Activated B cell treated with CpG ODN at 0.5 μM for 24 hours (primary cell): ENCODE measurements at regions of chr6 and their contacts with region 1.

Region 1: DNA sequence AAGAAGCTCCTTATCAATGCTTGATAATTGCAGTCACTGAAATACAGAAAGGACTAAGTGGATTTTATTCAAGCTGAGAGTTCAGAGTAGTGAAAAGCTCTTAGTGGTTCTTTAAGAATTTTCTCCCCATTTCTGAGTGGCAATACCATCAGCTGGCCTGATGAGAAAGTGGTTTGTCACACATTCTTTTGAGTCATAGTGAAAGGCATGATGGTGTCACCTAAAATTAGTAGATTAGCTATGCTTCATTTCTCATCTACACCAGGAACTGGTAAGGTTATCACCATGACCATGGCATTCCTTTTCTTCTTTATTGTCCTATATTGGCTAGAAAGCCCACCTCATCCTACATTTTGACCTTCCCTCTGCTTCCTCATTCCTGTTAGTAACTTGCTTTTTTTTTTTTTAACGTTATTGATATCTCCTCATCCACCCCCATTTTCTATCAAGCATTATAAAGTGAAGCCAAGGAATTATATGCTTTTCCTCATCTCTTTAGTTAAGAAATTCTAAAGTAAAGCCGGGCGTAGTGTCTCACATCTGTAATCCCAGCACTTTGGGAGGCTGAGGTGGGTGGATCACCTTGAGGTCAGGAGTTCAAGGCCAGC is 67.4 kb upstream of the LOC128125822 start:
- DNase-seq: no peak
- ATAC-seq: peak; percentile 71
- H3K4me3 Mint-ChIP-seq: no peak overlapping the region
- H3K27ac Mint-ChIP-seq: peak overlapping the region; percentile 24
- H3K4me1 Mint-ChIP-seq: peaks cover 8% of the 10 kb centered on the region
- H3K27me3 Mint-ChIP-seq: no peaks in the 10 kb centered on the region
- CTCF ChIP-seq: no peak

Region 2: DNA sequence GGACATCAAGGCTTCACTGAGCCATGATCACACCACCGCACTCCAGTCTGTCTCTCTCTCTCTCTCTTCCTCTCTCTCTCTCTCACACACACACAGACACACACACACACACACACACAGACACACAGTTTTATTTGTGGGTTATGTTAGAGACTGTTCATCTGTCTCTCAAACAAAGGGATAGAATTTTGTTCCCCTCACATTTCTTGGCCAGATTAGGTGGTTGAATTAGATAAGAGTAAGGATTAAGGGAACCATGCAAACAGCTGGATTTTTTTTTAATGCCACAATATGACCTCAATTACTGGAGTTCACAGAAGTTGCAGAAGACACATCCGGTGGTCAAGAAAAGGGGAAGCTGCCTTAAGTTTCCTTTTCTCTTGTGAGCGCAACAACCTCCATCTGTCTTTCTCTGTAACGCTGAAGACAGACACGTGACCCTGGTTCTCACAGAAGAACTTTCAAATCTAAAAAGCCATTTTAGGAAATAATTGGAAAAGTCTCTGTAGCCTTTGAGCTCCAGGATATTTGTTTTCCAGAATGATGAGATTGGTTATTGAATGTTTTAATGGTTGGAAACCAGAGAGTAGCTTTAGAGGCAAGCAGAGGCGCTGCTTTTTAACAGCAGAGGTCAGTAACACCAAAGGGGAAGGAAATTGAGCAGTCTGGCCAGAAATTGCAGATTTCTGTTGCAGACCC is 152.1 kb before region 1 on chr6:
- CTCF ChIA-PET with region 1: no interaction called
- POLR2A ChIA-PET with region 1: no interaction called
- intact Hi-C with region 1: loop called (anchors 5 kb)
- DNase-seq: no peak
- ATAC-seq: peak; percentile 77
- H3K4me3 Mint-ChIP-seq: peak overlapping the region; percentile 69
- H3K27ac Mint-ChIP-seq: peak overlapping the region; percentile 63
- H3K4me1 Mint-ChIP-seq: peaks cover 22% of the 10 kb centered on the region
- H3K27me3 Mint-ChIP-seq: no peaks in the 10 kb centered on the region
- CTCF ChIP-seq: no peak